H1 (cell line): ENCODE measurements at regions of chr2 and their contacts with region 1.

Region 1: GRCh38 chr2:130288461-130289403 is 54.0 kb upstream of the IMP4 start:
- DNase-seq: peak; percentile 68 to 86
- H3K4me3 ChIP-seq: peak overlapping the region in 3 of 4 experiments; percentile 7 to 43 (median 37); a peak in 4 of 8 replicates
- H3K27ac ChIP-seq: no peak overlapping the region
- H3K4me1 ChIP-seq: peaks cover 0 to 2% (median 0%) of the 10 kb centered on the region in 4 experiments; a peak in 1 of 7 replicates
- H3K27me3 ChIP-seq: 0 out of 7 replicates have a peak, but pooled peaks cover 0 to 3% (median 0%) of the 10 kb centered on the region in 4 experiments
- CTCF ChIP-seq: peak; percentile 22 to 64 (median 36)
- EP300 ChIP-seq: no peak
- POLR2A ChIP-seq: no peak
- RAD21 ChIP-seq: peak; percentile 50 to 71

Region 2: GRCh38 chr2:130316596-130316995 is 27.9 kb after region 1 on chr2:
- CTCF ChIA-PET with region 1: interaction called, 10 read pairs
- POLR2A ChIA-PET with region 1: no interaction called
- DNase-seq: no peak
- H3K4me3 ChIP-seq: no peak overlapping the region
- H3K27ac ChIP-seq: no peak overlapping the region
- H3K4me1 ChIP-seq: no peaks in the 10 kb centered on the region
- H3K27me3 ChIP-seq: no peaks in the 10 kb centered on the region; a peak in 1 of 7 replicates
- CTCF ChIP-seq: no peak
- EP300 ChIP-seq: no peak
- POLR2A ChIP-seq: no peak
- RAD21 ChIP-seq: no peak